Activated CD8-positive, alpha-beta T cell treated with anti-CD3 and anti-CD28 coated beads for 36 hours (primary cell): ENCODE measurements at regions of chr2 and their contacts with region 1.

Region 1: DNA sequence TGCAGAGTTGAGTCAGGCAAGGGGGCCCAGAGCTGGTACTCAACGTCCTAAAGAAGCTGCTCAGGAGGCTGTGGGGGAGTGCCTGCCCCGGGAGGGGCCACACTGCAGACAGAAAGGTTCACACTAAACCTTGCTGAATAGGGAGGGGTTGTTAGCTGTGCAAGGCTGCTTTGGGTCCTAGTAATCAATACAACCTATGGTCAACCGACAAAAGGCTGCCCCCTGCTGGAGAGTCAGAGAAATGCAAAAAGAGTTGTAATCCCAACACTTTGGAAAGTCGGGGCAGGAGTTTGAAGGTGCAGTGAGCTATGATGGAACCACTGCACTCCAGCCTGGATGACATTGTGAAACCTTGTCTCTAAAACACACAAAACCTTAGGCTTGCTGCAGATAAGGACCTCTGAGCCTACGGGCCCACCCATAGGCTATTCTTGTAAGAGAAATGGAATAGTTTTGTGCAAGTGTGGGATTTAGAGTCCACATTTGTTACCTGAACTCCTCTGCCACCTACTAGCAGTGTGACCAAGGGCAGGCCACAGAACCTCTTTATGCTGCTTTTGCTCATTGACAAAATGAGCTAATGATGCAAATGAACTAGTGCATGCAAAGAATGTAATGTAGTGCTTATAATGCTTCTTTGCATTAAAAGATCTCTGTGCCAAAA is 81.5 kb downstream of the PRPF40A start:
- DNase-seq: peak; percentile 75
- ATAC-seq: peak; percentile 75
- H3K4me3 Mint-ChIP-seq: no peak overlapping the region
- H3K27ac Mint-ChIP-seq: no peak overlapping the region
- H3K4me1 Mint-ChIP-seq: no peaks in the 10 kb centered on the region
- H3K27me3 Mint-ChIP-seq: no peaks in the 10 kb centered on the region
- CTCF ChIP-seq: peak; percentile 86

Region 2: DNA sequence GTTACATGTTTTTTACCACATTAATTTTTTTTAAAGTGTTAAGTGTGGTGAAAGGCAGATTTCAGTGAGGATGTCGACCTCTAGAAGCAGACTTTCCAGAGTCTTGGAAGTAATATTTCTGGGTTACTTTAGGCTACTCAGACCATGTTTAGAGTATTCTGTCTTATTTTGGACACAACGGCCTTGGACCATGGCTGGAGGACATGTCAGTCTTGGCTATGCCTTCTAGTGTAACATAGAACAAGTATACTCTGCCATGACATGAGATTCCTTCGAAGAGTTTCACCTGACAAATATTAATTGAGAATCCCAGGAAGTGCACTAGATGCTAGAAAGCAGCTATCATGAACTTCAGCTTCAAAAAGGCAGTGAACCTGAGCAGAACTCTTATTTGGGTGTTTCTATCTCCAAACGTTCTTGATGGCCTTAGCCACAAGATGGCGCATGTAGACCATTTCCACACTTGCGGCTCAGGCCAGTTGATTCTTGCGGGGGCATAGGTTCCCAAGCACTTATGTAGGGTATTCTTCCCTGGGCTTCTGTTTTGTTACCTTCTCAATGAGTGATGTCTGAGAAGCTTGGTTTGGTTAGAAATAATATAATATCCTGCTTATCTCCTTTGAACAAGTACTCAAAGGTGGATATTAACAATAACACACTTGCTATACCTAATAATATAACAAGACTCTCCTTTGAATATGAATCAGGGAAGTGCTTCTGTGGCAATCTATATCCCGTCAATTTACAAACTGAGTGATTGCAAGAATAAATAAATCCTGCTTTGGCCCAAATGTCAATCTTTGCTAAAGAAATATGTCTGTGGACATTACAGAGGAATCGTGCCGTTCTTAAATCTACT is 598.9 kb before region 1 on chr2:
- CTCF ChIA-PET with region 1: interaction called, 14 read pairs
- POLR2A ChIA-PET with region 1: no interaction called
- intact Hi-C with region 1: loop called (anchors 2 kb)
- DNase-seq: peak; percentile 77
- ATAC-seq: peak; percentile 72
- H3K4me3 Mint-ChIP-seq: no peak overlapping the region
- H3K27ac Mint-ChIP-seq: no peak overlapping the region
- H3K4me1 Mint-ChIP-seq: no peaks in the 10 kb centered on the region
- H3K27me3 Mint-ChIP-seq: peaks cover 2% of the 10 kb centered on the region
- CTCF ChIP-seq: peak; percentile 68

Region 3: DNA sequence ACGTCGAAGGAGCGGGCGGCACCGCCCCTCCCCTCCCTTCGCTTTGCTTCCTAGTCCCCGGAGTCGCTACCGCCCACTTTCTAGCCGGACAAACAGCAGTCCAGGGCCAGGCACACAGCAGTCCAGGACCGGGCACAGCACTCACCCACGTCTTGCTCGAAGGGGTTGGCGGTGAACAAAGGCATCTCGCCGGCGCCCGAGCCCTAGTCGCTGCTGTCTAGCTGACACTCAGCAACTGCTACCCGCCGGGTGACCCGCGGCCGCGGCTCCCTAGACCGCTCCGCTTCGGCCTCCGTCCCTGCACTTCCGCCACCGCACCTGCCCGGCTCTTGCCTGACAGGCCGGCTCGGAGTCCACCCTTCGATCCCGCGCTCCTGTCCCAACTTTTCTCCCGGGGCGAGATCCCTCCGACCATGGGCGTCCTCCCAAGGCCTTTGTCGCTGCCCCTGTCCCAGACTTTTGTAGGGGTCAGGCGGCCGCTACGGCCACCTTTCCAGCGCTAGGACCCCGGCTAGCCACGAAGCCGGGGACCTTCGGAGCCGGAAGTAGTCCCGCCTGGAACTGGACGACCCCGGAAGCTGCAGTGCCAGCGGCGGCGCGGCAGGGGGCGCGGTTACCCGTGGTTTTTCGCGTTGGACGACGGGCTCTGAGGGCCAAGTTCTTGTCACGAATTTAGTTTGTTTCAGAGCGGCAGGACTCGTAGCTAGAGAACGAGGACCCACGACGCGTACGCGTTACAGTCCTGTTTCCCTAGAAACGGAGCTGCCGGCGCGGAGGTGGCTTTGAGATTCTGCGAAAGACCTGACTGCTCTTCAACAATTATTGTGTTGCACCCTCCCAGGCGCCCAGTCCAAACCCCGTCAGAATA is 460.1 kb before region 1 on chr2 and contains the start of gene STAM2:
- CTCF ChIA-PET with region 1: interaction called, 37 read pairs
- POLR2A ChIA-PET with region 1: no interaction called
- intact Hi-C with region 1: loop called (anchors 2 kb)
- DNase-seq: peak; percentile 92
- ATAC-seq: peak; percentile 92
- H3K4me3 Mint-ChIP-seq: peak within 1 kb of the TSS; percentile 96
- H3K27ac Mint-ChIP-seq: peak within 1 kb of the TSS; percentile 100
- H3K4me1 Mint-ChIP-seq: peaks cover 33% of the 10 kb centered on the region
- H3K27me3 Mint-ChIP-seq: no peaks in the 10 kb centered on the region
- CTCF ChIP-seq: peak; percentile 75
- total RNA-seq, gene STAM2: 13.0 to 13.3 TPM

Region 4: DNA sequence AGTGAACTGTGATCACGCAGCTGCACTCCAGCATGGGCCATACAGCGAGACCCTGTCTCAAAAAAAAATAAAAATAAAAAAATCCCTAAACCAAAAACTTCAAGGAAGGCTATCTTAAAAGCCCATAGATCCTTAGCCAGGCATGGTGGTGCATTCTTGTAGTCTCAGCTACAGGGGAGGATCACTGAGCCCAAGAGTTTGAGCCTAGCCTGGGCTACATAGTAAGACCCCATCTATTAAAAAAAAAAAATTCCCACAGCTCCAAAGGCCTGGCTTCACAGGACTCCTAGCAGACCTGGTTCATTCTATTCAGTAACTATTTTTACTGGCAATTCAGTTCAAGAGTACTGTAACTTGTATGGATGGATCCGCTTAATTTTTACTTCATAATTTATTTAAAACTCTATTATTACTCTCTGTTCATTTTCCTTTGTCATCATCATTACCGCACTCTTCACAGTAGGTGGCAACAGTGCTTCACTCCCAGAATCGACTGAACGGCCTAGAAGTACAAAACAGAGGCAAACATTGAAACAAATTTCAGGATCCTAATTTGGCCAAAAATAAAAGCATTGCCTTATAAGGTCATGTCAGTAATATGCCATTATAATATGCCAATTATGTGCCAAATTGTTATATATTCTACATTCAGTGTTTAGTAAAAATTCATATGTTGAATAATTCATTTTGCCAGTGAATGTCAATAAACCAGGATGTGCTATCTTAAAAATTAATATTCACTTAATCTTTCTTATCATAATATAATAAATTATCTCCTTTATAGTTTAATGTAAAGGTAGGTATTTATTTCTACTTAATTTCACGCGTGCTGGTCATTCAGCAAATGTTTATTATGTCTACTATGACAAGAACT is 445.9 kb before region 1 on chr2:
- CTCF ChIA-PET with region 1: interaction called, 9 read pairs
- POLR2A ChIA-PET with region 1: no interaction called
- intact Hi-C with region 1: loop called (anchors 2 kb)
- DNase-seq: peak; percentile 16
- ATAC-seq: peak; percentile 62
- H3K4me3 Mint-ChIP-seq: no peak overlapping the region
- H3K27ac Mint-ChIP-seq: no peak overlapping the region
- H3K4me1 Mint-ChIP-seq: no peaks in the 10 kb centered on the region
- H3K27me3 Mint-ChIP-seq: peaks cover 20% of the 10 kb centered on the region
- CTCF ChIP-seq: peak; percentile 62

Region 5: DNA sequence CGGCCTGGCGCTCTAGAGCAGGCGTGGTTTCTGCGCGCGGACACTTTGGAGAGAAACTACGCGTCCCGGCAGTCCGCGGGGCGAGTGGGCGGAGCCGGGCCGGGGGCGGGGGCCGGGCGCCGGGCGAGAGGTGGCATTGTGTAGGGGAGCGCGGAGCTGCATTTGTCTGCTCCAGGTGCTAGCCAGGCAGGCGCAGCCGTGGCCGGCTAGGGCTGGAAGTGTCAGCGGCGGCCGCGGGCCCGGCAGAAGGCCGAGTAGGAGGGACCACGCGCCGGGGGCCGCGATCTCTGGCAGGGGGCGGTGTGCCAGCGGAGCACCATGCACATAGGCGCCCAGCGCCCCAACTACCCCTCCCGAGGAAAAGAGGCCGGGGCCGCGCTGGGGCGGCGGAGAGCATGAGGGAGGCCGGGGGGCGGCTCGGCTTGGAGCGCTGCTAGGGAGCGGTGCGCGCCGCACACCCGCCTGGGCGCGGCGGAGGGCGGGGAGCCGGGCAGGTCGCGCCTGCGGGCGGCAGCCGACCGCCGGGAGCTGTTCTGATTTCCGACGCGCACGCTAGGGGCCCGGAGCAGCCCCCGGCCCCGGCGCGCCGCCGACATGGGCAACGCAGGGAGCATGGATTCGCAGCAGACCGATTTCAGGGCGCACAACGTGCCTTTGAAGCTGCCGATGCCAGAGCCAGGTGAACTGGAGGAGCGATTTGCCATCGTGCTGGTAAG is 300.6 kb before region 1 on chr2 and contains the start of gene FMNL2:
- CTCF ChIA-PET with region 1: interaction called, 4 read pairs
- POLR2A ChIA-PET with region 1: no interaction called
- intact Hi-C with region 1: loop called (anchors 10 kb)
- DNase-seq: peak; percentile 68
- ATAC-seq: peak; percentile 87
- H3K4me3 Mint-ChIP-seq: peak within 1 kb of the TSS; percentile 64
- H3K27ac Mint-ChIP-seq: no peak within 1 kb of the TSS
- H3K4me1 Mint-ChIP-seq: peaks cover 7% of the 10 kb centered on the region
- H3K27me3 Mint-ChIP-seq: peaks cover 39% of the 10 kb centered on the region
- CTCF ChIP-seq: no peak
- total RNA-seq, gene FMNL2: 1.1 TPM

Region 6: DNA sequence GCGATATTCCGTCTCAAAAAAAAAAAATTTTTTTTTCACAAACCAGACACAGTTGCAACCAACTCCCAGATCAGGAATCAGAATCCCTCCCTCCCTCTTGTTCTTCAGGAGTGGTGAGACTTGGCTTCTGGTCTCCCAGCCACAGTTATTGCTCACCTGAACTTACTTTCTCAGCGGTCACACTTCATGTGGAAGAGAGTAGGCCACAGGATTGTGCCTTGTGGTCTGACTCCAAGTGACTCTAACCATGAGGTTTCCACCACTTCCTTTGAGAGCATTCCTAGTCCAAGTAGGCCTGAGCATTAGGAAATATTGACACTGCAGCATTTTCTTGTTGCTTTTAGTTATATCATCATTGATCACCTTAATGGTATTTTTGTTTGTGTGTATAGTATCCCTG is 288.7 kb before region 1 on chr2:
- CTCF ChIA-PET with region 1: no interaction called
- POLR2A ChIA-PET with region 1: no interaction called
- intact Hi-C with region 1: no loop called
- DNase-seq: no peak
- ATAC-seq: no peak
- H3K4me3 Mint-ChIP-seq: no peak overlapping the region
- H3K27ac Mint-ChIP-seq: no peak overlapping the region
- H3K4me1 Mint-ChIP-seq: no peaks in the 10 kb centered on the region
- H3K27me3 Mint-ChIP-seq: peaks cover 1% of the 10 kb centered on the region
- CTCF ChIP-seq: no peak

Region 7: DNA sequence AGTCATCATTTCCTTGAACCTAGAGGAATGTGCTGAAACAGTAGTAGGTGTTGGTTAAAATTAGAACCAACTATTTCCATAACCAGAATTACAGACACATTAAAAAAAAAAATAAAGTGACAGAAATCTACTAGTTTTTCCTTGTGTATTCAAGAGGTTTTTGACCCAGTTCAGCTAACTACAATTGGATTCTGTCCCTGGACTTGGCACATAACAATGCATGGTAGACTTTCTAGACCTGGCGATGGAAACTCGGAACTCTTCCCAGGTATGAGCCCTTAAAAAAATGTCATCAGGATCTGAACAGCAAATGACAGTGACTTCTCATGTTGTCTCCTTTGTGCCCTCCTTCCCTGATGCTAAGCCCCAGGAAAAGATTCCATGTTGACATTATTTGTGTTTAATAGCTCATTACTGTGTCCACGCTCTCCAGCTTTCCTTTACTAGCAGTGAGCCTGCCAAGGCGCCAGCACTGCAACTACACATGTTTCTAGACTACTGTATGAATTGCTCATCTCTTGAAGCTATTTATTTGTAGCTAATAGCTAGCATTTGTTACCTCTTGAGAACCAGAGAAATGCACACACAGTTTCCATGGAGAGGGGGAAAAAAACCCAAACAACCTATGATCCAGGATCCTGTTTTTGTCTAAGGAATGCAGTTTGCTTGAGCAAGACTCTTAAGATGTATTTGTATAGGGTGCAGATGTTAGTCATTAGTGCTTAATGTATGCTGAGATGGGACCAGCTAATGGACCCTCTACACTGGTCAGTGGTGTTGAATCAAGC is 152.3 kb before region 1 on chr2:
- CTCF ChIA-PET with region 1: no interaction called
- POLR2A ChIA-PET with region 1: no interaction called
- intact Hi-C with region 1: no loop called
- DNase-seq: no peak
- ATAC-seq: no peak
- H3K4me3 Mint-ChIP-seq: no peak overlapping the region
- H3K27ac Mint-ChIP-seq: no peak overlapping the region
- H3K4me1 Mint-ChIP-seq: no peaks in the 10 kb centered on the region
- H3K27me3 Mint-ChIP-seq: peaks cover 1% of the 10 kb centered on the region
- CTCF ChIP-seq: no peak

Region 8: DNA sequence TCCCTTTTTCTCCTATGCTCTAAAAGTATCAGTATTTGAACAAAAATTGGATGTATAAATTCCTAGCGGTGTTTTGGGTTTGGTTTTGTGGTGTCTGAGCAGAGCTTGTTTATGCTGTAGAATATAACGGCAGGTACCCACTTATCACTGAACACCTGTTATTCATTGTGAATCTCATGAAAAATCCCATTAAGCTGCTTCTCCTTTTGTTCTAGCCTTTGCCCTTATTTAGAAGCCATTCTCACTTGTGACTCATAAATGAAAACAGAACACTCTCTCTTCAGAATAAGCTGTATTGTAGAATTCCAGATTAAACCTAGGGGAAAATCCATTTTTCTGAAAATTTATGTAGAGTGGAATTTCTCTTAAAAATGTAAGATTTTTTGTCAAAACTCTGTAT is 22.5 kb before region 1 on chr2:
- CTCF ChIA-PET with region 1: interaction called, 13 read pairs
- POLR2A ChIA-PET with region 1: no interaction called
- intact Hi-C with region 1: no loop called
- DNase-seq: no peak
- ATAC-seq: no peak
- H3K4me3 Mint-ChIP-seq: no peak overlapping the region
- H3K27ac Mint-ChIP-seq: no peak overlapping the region
- H3K4me1 Mint-ChIP-seq: peaks cover 8% of the 10 kb centered on the region
- H3K27me3 Mint-ChIP-seq: no peaks in the 10 kb centered on the region
- CTCF ChIP-seq: no peak

Region 9: DNA sequence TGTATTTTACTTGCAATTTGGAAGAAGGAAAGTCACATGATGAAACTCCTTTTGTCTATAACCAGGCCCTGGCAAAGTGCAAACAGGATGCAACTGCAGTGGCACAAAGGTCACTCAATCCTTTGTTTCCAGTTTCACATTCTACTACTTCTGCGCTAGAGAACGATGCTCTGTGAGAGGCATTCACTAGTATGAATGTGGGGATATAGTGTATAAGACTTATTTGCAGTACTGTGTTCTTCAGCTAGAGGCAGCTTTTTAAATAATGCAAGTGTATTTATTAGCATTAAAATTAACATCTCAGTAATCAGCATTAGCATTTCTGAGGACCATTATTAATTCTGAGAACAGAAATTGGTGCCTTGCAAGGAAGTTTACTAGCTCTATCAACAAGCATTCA is 12.6 kb after region 1 on chr2:
- CTCF ChIA-PET with region 1: interaction called, 56 read pairs
- POLR2A ChIA-PET with region 1: interaction called, 3 read pairs
- intact Hi-C with region 1: no loop called
- DNase-seq: no peak
- ATAC-seq: peak; percentile 47
- H3K4me3 Mint-ChIP-seq: no peak overlapping the region
- H3K27ac Mint-ChIP-seq: no peak overlapping the region
- H3K4me1 Mint-ChIP-seq: peaks cover 2% of the 10 kb centered on the region
- H3K27me3 Mint-ChIP-seq: no peaks in the 10 kb centered on the region
- CTCF ChIP-seq: peak; percentile 21

Region 10: GRCh38 chr2:152723918-152724317 is 88.2 kb after region 1 on chr2:
- CTCF ChIA-PET with region 1: no interaction called
- POLR2A ChIA-PET with region 1: no interaction called
- intact Hi-C with region 1: no loop called
- DNase-seq: no peak
- ATAC-seq: no peak
- H3K4me3 Mint-ChIP-seq: no peak overlapping the region
- H3K27ac Mint-ChIP-seq: no peak overlapping the region
- H3K4me1 Mint-ChIP-seq: peaks cover 29% of the 10 kb centered on the region
- H3K27me3 Mint-ChIP-seq: no peaks in the 10 kb centered on the region
- CTCF ChIP-seq: no peak